Activated T-helper 1 cell treated with anti-CD3 and anti-CD28 coated beads, Interleukin-12 subunit alpha, Interleukin-12 subunit beta, Interleukin-2, Interleukin-4 antibody, amounts not matched to agents 30 ng/mL and 10 ng/mL and 1 ng/mL, durations not matched to agents 14 hours and 24 hours and 36 hours (primary cell): ENCODE measurements at regions of chr11 and their contacts with region 1.

Region 1: DNA sequence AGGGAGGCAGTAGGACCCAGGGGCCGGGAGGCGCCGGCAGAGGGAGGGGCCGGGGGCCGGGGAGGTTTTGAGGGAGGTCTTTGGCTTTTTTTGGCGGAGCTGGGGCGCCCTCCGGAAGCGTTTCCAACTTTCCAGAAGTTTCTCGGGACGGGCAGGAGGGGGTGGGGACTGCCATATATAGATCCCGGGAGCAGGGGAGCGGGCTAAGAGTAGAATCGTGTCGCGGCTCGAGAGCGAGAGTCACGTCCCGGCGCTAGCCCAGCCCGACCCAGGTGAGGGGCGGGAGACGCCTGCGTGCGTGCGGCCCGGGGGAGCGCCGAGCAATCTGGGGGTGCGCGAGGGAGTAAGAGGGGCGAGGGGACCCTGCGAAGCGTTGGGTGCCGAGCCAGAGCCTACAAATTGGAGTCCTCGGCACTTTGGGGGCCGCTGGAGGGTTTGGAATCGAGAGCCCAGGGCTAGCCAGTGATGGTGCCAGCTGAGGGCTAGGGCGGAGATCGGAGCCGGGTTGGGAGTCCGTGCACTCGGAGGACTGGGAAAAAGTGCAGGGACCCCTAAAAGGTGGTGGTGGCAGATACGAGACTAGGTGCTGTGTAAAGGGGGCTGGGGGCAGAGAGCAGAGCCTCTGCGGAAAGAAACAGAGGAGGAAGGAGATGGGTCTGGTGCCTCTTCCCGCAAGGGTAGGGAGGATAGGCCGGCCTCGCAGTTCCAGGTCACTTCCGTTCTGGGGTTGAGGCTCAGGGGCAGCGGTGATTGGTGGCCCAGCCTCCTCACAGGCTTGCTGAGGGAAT is at the start of gene SERPINH1:
- DNase-seq: peak; percentile 61
- H3K4me3 Mint-ChIP-seq: peak within 1 kb of the TSS; percentile 92
- H3K27ac Mint-ChIP-seq: peak within 1 kb of the TSS; percentile 90
- H3K4me1 Mint-ChIP-seq: peaks cover 15% of the 10 kb centered on the region
- H3K27me3 Mint-ChIP-seq: peaks cover 4% of the 10 kb centered on the region
- total RNA-seq, gene SERPINH1: 24.1 and 25.3 TPM in 2 replicates

Region 2: GRCh38 chr11:75547580-75548058 is 14.6 kb before region 1 on chr11:
- intact Hi-C with region 1: loop called (anchors 1 kb)
- DNase-seq: no peak
- H3K4me3 Mint-ChIP-seq: no peak overlapping the region
- H3K27ac Mint-ChIP-seq: no peak overlapping the region
- H3K4me1 Mint-ChIP-seq: no peaks in the 10 kb centered on the region
- H3K27me3 Mint-ChIP-seq: peaks cover 15% of the 10 kb centered on the region

Region 3: GRCh38 chr11:75582895-75583717 is 20.9 kb after region 1 on chr11:
- intact Hi-C with region 1: no loop called
- DNase-seq: no peak
- H3K4me3 Mint-ChIP-seq: peak overlapping the region; percentile 39
- H3K27ac Mint-ChIP-seq: peak overlapping the region; percentile 19
- H3K4me1 Mint-ChIP-seq: peaks cover 10% of the 10 kb centered on the region
- H3K27me3 Mint-ChIP-seq: peaks cover 39% of the 10 kb centered on the region

Region 4: DNA sequence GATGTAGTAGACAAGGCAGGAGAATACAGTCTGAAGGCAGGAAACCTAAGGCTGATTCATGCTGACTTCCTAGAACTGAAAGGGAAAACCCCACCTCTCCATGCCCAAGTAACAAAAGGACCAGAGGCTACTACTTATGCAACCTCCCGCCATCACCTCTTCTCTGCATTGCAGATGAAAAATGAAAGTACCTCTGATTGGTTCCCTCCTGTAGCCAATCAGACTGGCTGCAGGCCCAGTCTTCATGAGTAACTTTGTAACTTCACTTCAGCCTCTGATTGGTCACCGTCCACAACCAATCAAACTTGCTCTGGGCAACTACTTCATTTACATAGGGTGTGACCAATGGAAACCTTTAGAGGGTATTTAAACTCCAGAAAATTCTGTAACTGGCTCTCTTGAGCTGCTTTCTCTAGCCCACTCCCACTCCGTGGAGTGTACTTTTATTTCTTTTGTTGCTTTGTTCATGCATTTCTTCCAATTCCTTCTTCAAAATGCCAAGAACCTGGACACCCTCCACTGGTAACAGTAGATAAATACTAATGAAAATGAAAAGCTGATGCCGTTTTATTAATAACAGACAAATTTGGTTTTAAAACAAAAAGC is 111.8 kb after region 1 on chr11:
- intact Hi-C with region 1: loop called (anchors 10 kb)
- DNase-seq: peak; percentile 47
- H3K4me3 Mint-ChIP-seq: no peak overlapping the region
- H3K27ac Mint-ChIP-seq: no peak overlapping the region
- H3K4me1 Mint-ChIP-seq: peaks cover 42% of the 10 kb centered on the region
- H3K27me3 Mint-ChIP-seq: peaks cover 33% of the 10 kb centered on the region